ENCODE measurements at regions of chr1 and their contacts with region 1.

Region 1: GRCh38 chr1:10209905-10210810 is at the start of gene KIF1B:
- DNase-seq: peak; percentile 98
- ATAC-seq: peak; percentile 97
- H3K4me3 Mint-ChIP-seq: peak within 1 kb of the TSS; percentile 89
- H3K27ac Mint-ChIP-seq: peak within 1 kb of the TSS; percentile 61
- H3K4me1 Mint-ChIP-seq: peaks cover 25% of the 10 kb centered on the region
- H3K27me3 Mint-ChIP-seq: no peaks in the 10 kb centered on the region
- CTCF ChIP-seq: peak; percentile 87
- total RNA-seq, gene KIF1B: 5.9 and 7.2 TPM in 2 replicates

Region 2: DNA sequence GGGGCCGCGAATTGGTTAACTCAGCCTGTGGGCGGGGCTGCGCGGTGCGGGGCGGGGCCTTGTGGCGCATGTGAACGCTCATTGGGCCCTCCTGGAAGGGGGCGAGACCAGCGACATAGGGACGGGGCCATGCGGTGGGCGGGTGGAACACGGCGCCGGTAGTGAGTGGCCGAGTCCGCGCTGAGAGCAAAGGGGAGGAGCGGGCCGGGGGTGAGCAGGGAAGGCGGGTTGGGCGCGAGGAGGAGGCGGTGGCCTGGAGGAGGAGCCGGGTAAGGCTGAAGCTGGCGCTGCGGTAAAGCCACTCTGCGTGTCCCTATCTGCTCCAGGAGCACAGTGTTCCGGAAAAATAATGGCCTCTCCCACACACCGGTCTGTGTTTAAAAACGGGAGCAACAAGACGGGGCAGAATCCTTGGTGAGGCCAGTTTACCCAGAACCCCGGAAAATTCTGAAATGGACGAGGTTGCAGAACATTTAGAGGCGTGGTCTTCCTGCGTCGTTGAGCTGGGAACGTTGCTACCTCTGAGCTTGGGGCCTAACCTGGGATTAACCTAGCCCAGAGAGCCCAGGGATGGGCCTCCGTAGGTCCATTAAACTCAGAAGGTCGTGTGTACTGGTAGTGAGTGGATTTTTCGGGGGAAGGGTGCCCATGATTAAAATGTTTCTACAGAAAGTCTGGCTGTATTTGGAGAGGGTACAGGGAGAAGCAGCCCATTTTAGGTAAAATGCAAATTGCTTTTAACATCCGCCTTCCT is 299.6 kb before region 1 on chr1:
- CTCF ChIA-PET with region 1: no interaction called
- POLR2A ChIA-PET with region 1: interaction called, 3 read pairs
- intact Hi-C with region 1: loop called (anchors 1 kb)
- DNase-seq: no peak
- ATAC-seq: peak; percentile 90
- H3K4me3 Mint-ChIP-seq: peak overlapping the region; percentile 97
- H3K27ac Mint-ChIP-seq: peak overlapping the region; percentile 99
- H3K4me1 Mint-ChIP-seq: peaks cover 22% of the 10 kb centered on the region
- H3K27me3 Mint-ChIP-seq: no peaks in the 10 kb centered on the region
- CTCF ChIP-seq: no peak

Region 3: GRCh38 chr1:10338047-10338446 is 127.9 kb after region 1 on chr1:
- CTCF ChIA-PET with region 1: interaction called, 3 read pairs
- POLR2A ChIA-PET with region 1: no interaction called
- intact Hi-C with region 1: loop called (anchors 1 kb)
- DNase-seq: no peak
- ATAC-seq: peak; percentile 57
- H3K4me3 Mint-ChIP-seq: no peak overlapping the region
- H3K27ac Mint-ChIP-seq: no peak overlapping the region
- H3K4me1 Mint-ChIP-seq: no peaks in the 10 kb centered on the region
- H3K27me3 Mint-ChIP-seq: no peaks in the 10 kb centered on the region
- CTCF ChIP-seq: no peak

Region 4: DNA sequence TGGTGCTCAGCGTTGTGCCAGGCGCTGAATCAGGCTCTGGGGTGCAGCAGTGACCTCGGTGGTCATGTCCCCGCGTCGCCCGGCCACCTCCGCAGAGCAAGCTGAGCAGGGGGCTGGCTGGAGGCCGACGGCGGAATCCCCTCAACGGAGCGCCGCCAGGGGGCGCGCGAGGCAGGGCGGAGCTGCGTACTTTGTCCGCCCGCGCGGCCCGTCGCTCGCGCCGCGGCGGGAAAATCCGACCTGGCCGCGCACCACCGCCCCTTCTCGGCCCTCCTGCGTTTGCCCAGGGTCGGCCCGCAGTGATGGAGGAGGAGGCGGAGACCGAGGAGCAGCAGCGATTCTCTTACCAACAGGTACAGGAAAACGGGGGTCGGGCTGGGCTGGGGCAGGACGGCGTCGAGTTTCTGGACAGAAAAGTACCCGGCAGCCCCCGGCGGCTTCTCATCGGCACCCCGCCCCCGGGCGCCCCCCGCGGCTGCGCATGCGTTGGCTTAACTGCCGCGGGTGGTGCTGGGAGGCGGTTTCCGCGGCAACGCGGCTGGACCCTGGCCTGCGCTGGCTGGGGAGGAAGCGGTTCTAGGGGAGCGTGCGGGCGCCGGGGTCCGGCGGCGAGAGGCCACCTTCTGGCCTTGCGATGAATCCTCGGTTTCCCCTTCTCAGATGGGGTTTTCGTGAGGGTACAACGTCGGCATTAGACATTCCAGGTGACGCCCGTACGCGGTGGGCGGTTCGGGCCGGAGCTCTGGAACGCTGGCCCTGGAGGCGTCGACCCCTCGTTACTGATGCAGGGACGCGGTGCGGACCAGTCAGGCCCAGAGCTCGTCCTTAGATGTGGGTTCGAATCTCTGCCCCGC is 220.3 kb after region 1 on chr1 and contains the start of gene CENPS:
- CTCF ChIA-PET with region 1: interaction called, 20 read pairs
- POLR2A ChIA-PET with region 1: interaction called, 5 read pairs
- intact Hi-C with region 1: loop called (anchors 1 kb)
- DNase-seq: peak; percentile 91
- ATAC-seq: peak; percentile 86
- H3K4me3 Mint-ChIP-seq: peak within 1 kb of the TSS; percentile 92
- H3K27ac Mint-ChIP-seq: peak within 1 kb of the TSS; percentile 96
- H3K4me1 Mint-ChIP-seq: peaks cover 28% of the 10 kb centered on the region
- H3K27me3 Mint-ChIP-seq: no peaks in the 10 kb centered on the region
- CTCF ChIP-seq: peak; percentile 57
- total RNA-seq, gene CENPS: 9.2 and 15.2 TPM in 2 replicates

Region 5: DNA sequence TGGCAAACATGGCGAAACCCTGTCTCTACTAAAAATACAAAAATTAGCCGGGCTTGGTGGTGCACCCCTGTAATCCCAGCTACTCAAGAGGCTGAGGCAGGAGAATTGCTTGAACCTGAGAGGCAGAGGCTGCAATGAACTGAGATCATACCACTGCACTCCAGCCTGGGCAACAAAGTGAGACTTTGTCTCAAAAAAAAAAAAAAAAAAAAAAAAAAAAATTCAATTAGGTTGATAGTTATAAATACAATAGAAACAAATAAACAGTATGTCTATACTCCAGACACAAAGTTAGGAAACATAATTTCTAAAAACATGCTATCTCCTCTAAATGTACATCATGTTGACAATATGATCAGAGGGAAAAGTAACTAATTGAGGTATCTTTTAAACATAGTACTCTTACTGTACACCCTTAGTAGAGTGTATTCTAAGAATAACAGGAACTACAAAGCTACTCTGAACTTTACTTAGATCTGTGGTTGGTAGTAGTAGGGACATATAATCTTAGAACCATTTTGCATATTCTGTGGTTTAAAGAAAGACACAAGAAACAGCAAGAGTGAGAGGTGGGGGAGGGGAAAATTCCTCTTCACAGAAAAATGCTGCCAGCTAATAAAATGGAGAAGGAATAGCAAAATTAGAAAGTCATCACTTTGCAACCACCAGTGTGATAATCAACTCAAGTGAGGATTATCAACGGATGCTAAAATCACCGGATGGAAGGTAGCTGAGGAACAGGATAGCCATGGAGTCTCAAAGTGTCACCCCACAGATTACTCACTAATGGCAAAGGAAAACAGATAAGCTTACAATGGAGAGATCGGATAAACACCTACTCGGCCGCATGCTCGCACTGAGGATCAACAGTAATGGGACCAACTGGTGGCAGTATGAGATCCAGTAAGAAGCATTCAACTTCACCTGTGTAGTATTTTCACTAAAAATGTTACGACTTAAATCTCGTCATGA is 1017.2 kb after region 1 on chr1:
- CTCF ChIA-PET with region 1: no interaction called
- POLR2A ChIA-PET with region 1: interaction called, 10 read pairs
- intact Hi-C with region 1: no loop called
- DNase-seq: no peak
- ATAC-seq: peak; percentile 75
- H3K4me3 Mint-ChIP-seq: peak overlapping the region; percentile 64
- H3K27ac Mint-ChIP-seq: peak overlapping the region; percentile 86
- H3K4me1 Mint-ChIP-seq: peaks cover 57% of the 10 kb centered on the region
- H3K27me3 Mint-ChIP-seq: no peaks in the 10 kb centered on the region
- CTCF ChIP-seq: no peak